BJ (cell line): ENCODE measurements at regions of chr1 and their contacts with region 1.

Region 1: GRCh38 chr1:24150234-24151174 is 7.6 kb upstream of the IL22RA1 start:
- DNase-seq: no peak
- H3K4me3 ChIP-seq: no peak overlapping the region
- H3K27me3 ChIP-seq: peaks cover 9% of the 10 kb centered on the region
- CTCF ChIP-seq: peak; percentile 91

Region 2: GRCh38 chr1:24119859-24120756 is 30.4 kb before region 1 on chr1:
- CTCF ChIA-PET with region 1: interaction called, 20 read pairs
- POLR2A ChIA-PET with region 1: no interaction called
- DNase-seq: no peak
- H3K4me3 ChIP-seq: no peak overlapping the region
- H3K27me3 ChIP-seq: no peaks in the 10 kb centered on the region
- CTCF ChIP-seq: no peak

Region 3: GRCh38 chr1:24126018-24126671 is 24.4 kb before region 1 on chr1:
- CTCF ChIA-PET with region 1: interaction called, 14 read pairs
- POLR2A ChIA-PET with region 1: no interaction called
- DNase-seq: no peak
- H3K4me3 ChIP-seq: no peak overlapping the region
- H3K27me3 ChIP-seq: no peaks in the 10 kb centered on the region; the same call in 1 of the 2 replicates
- CTCF ChIP-seq: no peak

Region 4: DNA sequence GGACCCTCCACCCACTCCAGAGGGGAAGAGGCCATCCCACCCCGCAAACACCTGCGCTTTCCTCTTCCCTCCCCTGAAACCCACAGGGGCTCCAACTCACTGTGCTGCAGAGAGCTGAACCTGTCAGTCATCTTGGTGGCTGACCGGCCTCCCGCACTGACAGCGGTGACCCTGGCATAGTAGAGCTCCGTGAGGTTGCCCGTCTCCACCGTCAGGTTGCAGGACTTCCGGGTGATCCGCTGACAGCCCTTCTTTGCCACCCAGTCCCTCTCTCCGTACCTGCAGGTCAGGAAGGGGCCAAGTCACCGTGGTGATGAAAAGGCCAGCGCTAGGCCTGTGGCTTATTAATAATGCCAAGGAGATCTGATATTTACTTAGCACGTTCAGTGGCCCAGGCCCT is 13.5 kb before region 1 on chr1:
- CTCF ChIA-PET with region 1: interaction called, 41 read pairs
- POLR2A ChIA-PET with region 1: no interaction called
- DNase-seq: no peak
- H3K4me3 ChIP-seq: no peak overlapping the region
- H3K27me3 ChIP-seq: peaks cover 8% of the 10 kb centered on the region
- CTCF ChIP-seq: no peak

Region 5: DNA sequence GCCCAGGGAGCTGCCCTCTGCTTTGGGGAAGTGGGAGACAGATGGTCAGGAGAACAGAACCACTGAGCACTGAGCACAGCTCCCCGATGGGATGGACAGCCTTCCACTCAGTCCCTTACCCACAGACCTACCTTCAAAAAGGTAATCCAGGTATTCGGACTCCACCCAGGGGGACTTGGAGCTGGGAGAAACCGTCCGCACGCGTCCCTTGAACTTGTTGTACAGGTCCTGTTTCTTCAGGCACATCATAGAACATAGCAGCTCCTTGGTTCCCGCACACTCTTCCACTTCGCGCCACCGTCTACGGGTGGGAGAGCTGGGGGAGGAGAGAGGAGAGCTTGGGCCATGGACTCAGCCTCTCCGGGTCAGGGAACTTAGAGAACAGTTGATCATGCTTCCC is 18.8 kb after region 1 on chr1:
- CTCF ChIA-PET with region 1: interaction called, 14 read pairs
- POLR2A ChIA-PET with region 1: no interaction called
- DNase-seq: no peak
- H3K4me3 ChIP-seq: no peak overlapping the region
- H3K27me3 ChIP-seq: peaks cover 18% of the 10 kb centered on the region
- CTCF ChIP-seq: no peak